IMR-90 (cell line): ENCODE measurements at regions of chr7 and their contacts with region 1.

Region 1: DNA sequence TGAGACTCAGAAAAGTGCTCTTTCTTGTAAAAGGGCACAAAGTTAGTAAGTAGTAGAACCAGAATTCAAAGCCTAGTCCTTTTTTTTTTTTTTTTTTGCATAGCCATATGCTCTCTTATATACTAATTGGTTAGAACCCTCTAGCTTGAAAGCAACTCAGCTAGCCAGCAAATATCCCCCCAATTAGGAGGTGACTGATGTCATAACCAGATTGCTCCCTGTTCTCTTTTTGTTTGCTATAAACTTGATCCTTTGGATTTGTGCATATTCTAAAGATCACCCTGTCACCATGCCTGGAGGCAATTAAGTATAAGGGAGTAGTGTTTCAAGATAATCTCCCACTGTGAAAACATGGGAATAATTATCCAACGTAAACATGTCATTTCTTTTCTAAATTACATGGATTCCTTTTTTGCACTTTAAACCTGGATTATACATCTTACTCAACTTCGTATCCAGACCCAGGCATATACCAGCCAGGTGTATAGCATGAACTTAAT is 963.4 kb downstream of the CNTNAP2 start:
- DNase-seq: no peak
- ATAC-seq: no peak
- H3K4me3 ChIP-seq: no peak overlapping the region
- H3K27ac ChIP-seq: no peak overlapping the region
- H3K4me1 ChIP-seq: no peaks in the 10 kb centered on the region
- H3K27me3 ChIP-seq: no peaks in the 10 kb centered on the region
- CTCF ChIP-seq: no peak
- POLR2A ChIP-seq: no peak
- RAD21 ChIP-seq: no peak

Region 2: DNA sequence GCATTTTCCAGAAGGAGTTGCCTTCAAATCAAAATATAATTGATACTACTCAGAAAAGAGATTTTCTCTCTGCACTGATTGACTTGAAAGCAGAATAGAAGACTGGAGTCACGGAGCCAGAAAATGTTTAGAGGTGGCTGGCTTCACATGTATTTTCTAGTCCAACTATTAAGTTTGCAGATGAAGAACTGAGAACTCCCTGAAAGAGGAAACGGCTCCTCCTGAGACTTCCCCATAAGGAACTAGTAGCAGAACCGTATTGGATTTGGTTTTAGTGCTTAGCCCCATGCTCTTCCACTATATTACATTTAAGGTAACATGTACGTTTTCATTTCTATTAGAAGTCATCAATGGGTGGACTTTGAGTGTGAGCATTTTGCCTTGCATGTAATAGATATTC is 17.1 kb before region 1 on chr7:
- CTCF ChIA-PET with region 1: no interaction called
- POLR2A ChIA-PET with region 1: no interaction called
- dilution Hi-C with region 1: no loop called
- in situ Hi-C with region 1: no loop called
- intact Hi-C with region 1: loop called (anchors 1 kb)
- DNase-seq: no peak
- ATAC-seq: no peak
- H3K4me3 ChIP-seq: no peak overlapping the region
- H3K27ac ChIP-seq: no peak overlapping the region
- H3K4me1 ChIP-seq: no peaks in the 10 kb centered on the region
- H3K27me3 ChIP-seq: no peaks in the 10 kb centered on the region
- CTCF ChIP-seq: no peak
- POLR2A ChIP-seq: no peak
- RAD21 ChIP-seq: no peak